Heart left ventricle (tissue), 16 donors: ENCODE measurements at regions of chr6 and their contacts with region 1.

Region 1: DNA sequence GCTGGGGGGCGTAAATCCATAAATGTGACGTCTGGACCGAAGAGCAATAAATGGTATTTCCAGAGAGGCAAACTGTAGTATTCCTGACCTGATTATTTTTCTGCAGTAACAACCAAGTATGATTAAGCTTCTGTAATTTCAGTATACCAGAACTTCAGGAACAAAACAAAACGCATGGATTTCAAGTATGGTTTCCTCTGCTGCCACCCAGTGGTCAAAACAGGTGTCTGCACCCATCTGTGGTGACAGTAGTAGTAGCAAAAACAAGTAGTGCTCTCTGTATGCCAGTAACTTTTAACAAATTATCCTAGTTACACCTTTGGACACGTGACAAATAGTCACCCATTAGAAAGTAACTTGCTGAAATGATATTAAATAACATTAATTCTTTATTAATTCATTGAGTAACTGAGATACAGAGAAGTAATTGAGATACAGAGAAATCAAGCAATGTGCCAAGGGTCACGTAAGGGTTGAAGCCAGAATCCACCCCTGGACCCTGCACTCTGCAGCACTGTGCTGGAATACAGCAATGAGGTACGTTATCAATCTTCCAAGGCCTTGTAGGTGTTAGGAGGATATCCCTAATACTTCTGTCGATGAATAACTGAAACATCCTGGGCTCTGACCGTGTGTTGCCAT is 7.9 kb downstream of the CALHM4 start:
- DNase-seq: peak; percentile 49 to 73 (median 64)
- ATAC-seq: peak in 3 of 4 donors; percentile 41 to 63 (median 43)
- H3K4me3 ChIP-seq: peak overlapping the region in 1 of 12 donors; percentile 32
- H3K27ac ChIP-seq: no peak overlapping the region
- H3K4me1 ChIP-seq: peaks cover 0 to 27% (median 7%) of the 10 kb centered on the region in 12 donors
- H3K27me3 ChIP-seq: no peaks in the 10 kb centered on the region
- CTCF ChIP-seq: peak; percentile 87 to 97 (median 95)
- POLR2A ChIP-seq: no peak

Region 2: GRCh38 chr6:116111552-116112528 is 449.7 kb before region 1 on chr6:
- intact Hi-C with region 1: loop called in 1 of 10 experiments (anchors 10 kb)
- DNase-seq: no peak
- ATAC-seq: peak in 2 of 4 donors; percentile 45
- H3K4me3 ChIP-seq: no peak overlapping the region
- H3K27ac ChIP-seq: no peak overlapping the region
- H3K4me1 ChIP-seq: peaks cover 0 to 6% (median under 1%) of the 10 kb centered on the region in 12 donors
- H3K27me3 ChIP-seq: no peaks in the 10 kb centered on the region
- CTCF ChIP-seq: peak in 6 of 12 donors; percentile 16 to 50 (median 39)
- POLR2A ChIP-seq: no peak

Region 3: DNA sequence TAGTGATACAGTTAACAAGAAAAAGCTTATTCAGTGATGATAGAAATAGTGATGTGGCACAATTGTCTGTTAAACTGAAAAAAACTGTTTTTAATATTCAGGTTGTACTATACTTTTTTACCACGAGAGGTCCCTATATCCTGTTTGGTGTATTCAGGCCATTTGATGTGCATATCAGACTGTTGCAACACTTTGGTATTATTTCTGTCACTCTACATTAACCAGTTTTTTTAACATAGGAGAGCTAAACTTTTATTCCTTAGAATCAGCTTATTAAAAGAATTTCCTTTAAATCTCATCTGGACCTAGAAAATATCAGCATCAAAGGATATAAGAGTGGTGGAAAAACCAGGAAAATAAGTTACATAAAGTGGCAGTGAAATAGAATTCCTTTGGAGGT is 344.4 kb before region 1 on chr6:
- intact Hi-C with region 1: loop called in 3 of 10 experiments (anchors 5 kb)
- DNase-seq: no peak
- ATAC-seq: peak in 3 of 4 donors; percentile 40 to 59 (median 48)
- H3K4me3 ChIP-seq: no peak overlapping the region
- H3K27ac ChIP-seq: no peak overlapping the region
- H3K4me1 ChIP-seq: peaks cover 0 to 11% (median 3%) of the 10 kb centered on the region in 12 donors
- H3K27me3 ChIP-seq: no peaks in the 10 kb centered on the region
- CTCF ChIP-seq: peak; percentile 42 to 67 (median 54)
- POLR2A ChIP-seq: no peak

Region 4: DNA sequence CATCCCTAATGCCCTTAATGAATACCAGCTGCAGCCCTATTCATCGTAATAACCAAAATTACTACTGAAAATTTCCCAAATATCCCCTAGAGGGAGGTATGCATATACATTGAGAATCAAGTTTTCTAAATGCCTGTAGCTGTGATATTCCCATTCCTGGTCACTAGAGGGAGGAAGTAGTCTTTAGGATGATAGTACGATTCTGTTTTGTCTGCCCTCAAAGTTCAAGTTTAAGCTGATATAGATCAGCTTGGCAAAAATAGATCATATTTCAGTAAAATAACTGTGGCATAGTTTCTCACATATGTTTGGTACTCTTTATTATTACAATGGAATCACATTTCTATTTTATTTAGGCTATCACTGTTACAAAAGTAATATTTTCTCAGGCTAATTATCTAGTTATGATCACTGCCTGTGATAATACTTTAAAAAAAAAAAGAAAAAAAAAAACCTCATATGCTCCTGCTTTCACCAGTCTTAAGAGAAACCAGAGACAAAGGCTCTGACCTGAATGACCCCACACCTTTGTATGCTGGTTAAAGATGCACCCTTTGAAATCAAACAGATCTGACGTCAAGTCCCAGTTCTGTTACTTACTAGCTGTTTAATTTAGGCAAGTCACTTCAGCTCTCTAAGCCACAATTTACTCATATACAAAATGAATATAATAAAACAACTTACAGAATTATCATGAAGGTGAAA is 292.8 kb before region 1 on chr6:
- intact Hi-C with region 1: loop called in 4 of 10 experiments (anchors 10 kb)
- DNase-seq: no peak
- ATAC-seq: peak in 3 of 4 donors; percentile 56 to 65 (median 64)
- H3K4me3 ChIP-seq: no peak overlapping the region
- H3K27ac ChIP-seq: no peak overlapping the region
- H3K4me1 ChIP-seq: peaks cover 0 to 19% (median 3%) of the 10 kb centered on the region in 12 donors
- H3K27me3 ChIP-seq: no peaks in the 10 kb centered on the region
- CTCF ChIP-seq: peak; percentile 52 to 83 (median 72)
- POLR2A ChIP-seq: no peak

Region 5: DNA sequence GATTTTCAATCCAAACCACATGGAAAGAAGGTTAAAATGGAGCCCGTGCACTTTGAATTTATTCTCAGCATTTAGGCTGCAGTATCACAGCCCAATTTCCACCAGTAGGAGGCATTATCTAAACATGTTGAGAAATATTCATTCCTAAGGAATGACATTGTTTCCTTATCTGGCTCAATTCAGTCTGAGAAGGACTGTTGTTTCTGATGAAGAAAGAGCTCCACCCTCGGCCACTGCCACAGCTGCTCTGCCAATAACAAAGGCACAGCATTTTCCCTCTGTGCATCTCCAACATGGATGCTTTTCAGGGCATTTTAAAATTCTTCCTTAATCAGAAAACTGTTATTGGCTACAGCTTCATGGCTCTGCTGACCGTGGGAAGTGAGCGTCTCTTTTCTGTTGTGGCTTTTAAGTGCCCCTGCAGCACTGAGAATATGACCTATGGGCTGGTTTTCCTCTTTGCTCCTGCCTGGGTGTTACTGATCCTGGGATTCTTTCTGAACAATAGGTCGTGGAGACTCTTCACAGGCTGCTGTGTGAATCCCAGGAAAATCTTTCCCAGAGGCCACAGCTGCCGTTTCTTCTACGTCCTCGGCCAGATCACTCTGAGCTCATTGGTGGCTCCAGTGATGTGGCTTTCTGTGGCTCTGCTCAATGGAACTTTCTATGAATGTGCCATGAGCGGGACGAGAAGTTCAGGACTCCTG is 49.9 kb before region 1 on chr6 and contains the start of gene CALHM5:
- intact Hi-C with region 1: loop called in 2 of 10 experiments (anchors 2 kb)
- DNase-seq: peak; percentile 42 to 69 (median 54)
- ATAC-seq: peak; percentile 81 to 96 (median 94)
- H3K4me3 ChIP-seq: peak within 1 kb of the TSS; percentile 15 to 65 (median 50)
- H3K27ac ChIP-seq: peak within 1 kb of the TSS; percentile 46 to 92 (median 84)
- H3K4me1 ChIP-seq: peaks cover 0 to 32% (median 11%) of the 10 kb centered on the region in 12 donors
- H3K27me3 ChIP-seq: no peaks in the 10 kb centered on the region
- CTCF ChIP-seq: peak; percentile 54 to 82 (median 68)
- POLR2A ChIP-seq: no peak
- total RNA-seq, gene CALHM5: 1.4 to 3.0 (median 1.8) TPM

Region 6: DNA sequence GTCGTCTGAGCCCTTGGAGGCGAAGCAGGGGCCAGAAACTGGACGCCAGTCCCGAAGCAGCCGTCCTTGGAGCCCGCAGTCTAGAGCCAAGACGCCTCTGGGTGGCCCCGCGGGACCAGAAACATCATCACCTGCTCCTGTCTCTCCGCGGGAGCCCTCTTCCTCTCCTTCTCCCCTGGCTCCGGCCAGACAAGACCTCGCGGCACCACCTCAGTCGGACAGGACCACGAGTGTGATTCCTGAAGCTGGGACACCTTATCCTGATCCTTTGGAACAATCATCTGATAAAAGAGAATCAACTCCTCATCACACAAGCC is 55.2 kb after region 1 on chr6:
- intact Hi-C with region 1: no loop called
- DNase-seq: peak in 4 of 5 donors; percentile 13 to 60 (median 25)
- ATAC-seq: peak in 3 of 4 donors; percentile 25 to 32 (median 28)
- H3K4me3 ChIP-seq: peak overlapping the region; percentile 2 to 68 (median 54)
- H3K27ac ChIP-seq: no peak overlapping the region
- H3K4me1 ChIP-seq: peaks cover 0 to 14% (median 4%) of the 10 kb centered on the region in 12 donors
- H3K27me3 ChIP-seq: no peaks in the 10 kb centered on the region
- CTCF ChIP-seq: no peak
- POLR2A ChIP-seq: no peak